ENCODE measurements at regions of chr7 and their contacts with region 1.

Region 1: GRCh38 chr7:80312139-80312661 is 177.6 kb downstream of the GNAI1 start:
- DNase-seq: peak; percentile 97
- H3K4me3 ChIP-seq: no peak overlapping the region
- H3K27ac ChIP-seq: peak overlapping the region; percentile 96
- H3K4me1 ChIP-seq: peaks cover 45% of the 10 kb centered on the region
- H3K27me3 ChIP-seq: no peaks in the 10 kb centered on the region
- CTCF ChIP-seq: no peak
- POLR2A ChIP-seq: peak; percentile 56

Region 2: DNA sequence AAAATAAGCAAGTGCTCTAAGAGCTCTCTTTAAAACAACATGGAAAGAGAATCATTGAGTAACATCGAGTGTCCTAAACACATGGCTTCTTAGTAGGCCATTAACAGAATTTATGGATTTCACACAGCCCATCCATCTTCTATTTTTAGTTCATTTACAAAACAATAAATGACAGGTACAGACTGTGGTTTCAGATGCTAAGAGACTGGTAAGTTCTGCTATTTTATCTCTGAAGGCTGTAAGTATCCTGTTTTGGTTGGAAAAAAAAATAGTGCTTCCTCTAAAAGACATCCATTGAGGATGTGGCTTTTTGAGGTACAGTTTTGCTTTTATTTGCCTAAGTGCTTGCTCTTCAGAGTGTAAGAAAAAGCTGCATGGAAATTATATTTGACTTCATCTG is 204.9 kb before region 1 on chr7:
- CTCF ChIA-PET with region 1: no interaction called
- POLR2A ChIA-PET with region 1: no interaction called
- dilution Hi-C with region 1: no loop called
- intact Hi-C with region 1: loop called (anchors 2 kb)
- DNase-seq: peak; percentile 59
- H3K4me3 ChIP-seq: peak overlapping the region in 1 of 3 experiments; percentile 40
- H3K27ac ChIP-seq: peak overlapping the region; percentile 58
- H3K4me1 ChIP-seq: peaks cover 28% of the 10 kb centered on the region
- H3K27me3 ChIP-seq: no peaks in the 10 kb centered on the region
- CTCF ChIP-seq: no peak
- POLR2A ChIP-seq: no peak

Region 3: DNA sequence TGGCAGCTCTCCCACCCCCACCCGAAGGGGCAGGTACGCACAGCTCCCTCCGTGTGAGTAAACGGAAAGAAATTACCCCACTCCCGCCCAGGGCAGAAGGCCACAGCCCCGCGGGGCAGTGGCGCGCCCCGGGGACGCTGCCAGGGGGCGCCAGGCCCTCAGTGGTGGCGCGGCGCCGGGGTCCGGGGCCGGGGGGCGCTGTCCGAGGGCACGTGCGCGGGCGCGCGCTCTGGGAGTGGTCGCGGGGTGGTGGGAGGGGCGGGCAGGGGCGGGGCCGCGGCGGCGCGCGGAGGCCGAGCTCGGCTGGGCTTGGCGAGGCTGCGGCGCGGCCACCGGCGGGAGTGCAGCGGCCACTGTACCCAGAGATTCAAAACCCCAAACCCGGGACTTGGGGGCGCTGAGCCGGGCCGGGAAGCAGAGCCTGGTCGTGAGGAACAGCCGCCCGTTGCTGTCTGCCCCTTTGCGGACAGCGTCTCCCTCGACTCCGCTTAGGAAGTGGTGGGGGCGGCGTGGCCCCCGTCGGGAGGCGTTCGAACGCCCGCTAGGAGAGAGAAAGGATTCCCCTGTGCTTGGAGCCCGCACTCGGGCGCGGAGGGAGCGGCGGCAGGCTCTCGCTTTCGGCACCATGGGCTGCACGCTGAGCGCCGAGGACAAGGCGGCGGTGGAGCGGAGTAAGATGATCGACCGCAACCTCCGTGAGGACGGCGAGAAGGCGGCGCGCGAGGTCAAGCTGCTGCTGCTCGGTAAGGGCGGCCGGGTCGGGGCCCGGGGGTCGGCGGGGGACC is 177.5 kb before region 1 on chr7 and contains the start of gene GNAI1:
- CTCF ChIA-PET with region 1: no interaction called
- POLR2A ChIA-PET with region 1: no interaction called
- dilution Hi-C with region 1: no loop called
- intact Hi-C with region 1: loop called (anchors 5 kb)
- DNase-seq: peak; percentile 65
- H3K4me3 ChIP-seq: peak within 1 kb of the TSS; percentile 88 to 94 (median 91)
- H3K27ac ChIP-seq: peak within 1 kb of the TSS; percentile 54
- H3K4me1 ChIP-seq: peaks cover 17% of the 10 kb centered on the region
- H3K27me3 ChIP-seq: peaks cover 0 to 1% of the 10 kb centered on the region in 2 experiments
- CTCF ChIP-seq: peak; percentile 30 to 49
- POLR2A ChIP-seq: peak; percentile 70
- total RNA-seq, gene GNAI1: 15.0 and 19.7 TPM in 2 replicates

Region 4: DNA sequence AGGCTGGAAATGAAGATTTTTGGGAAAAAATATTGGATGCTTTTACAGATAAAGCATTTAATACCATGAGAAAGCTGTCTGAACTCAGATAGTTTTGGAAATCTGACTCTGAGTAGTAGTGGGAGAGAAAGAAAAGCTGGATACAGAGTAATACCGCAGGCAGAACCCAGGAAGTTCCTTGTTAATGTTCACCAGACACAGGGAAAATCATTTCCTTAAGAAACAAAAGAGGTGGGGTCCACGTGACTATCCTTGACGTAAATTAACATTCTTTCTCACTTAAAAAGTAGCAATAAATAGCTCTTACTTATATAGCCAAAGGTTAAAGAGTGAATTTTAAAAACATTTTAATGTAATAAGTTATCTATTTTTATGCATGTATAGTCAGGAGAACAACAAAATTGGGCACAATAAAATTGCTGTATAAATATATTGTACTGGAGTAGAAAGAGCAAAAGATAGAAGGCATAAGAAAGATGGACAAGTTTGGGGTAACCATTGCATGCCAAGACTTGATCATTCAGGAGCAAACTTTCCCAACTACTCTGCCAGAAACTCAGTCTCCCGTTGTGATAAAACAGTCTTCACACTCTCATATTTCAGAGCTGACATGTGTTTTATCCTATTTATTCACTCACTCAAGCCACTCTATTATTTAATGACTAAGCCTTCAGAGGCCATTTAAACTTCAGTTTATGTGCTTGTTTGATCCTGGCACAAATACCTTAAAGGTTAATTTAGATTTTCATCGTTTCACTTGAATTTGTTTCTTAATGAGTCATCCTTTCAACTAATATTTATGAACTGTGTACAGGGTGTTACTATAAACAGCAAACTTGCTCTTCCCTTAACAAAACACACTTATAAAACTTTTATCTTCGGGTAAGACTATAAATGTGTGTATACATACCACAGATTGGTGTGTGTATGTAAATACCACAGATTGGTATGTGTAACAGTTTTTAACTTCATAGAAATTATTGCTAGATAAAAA is 34.5 kb before region 1 on chr7:
- CTCF ChIA-PET with region 1: no interaction called
- POLR2A ChIA-PET with region 1: no interaction called
- dilution Hi-C with region 1: no loop called
- intact Hi-C with region 1: loop called (anchors 1 kb)
- DNase-seq: peak; percentile 41
- H3K4me3 ChIP-seq: no peak overlapping the region
- H3K27ac ChIP-seq: no peak overlapping the region
- H3K4me1 ChIP-seq: peaks cover 7% of the 10 kb centered on the region
- H3K27me3 ChIP-seq: no peaks in the 10 kb centered on the region
- CTCF ChIP-seq: no peak
- POLR2A ChIP-seq: no peak

Region 5: GRCh38 chr7:80324032-80324431 is 11.8 kb after region 1 on chr7:
- CTCF ChIA-PET with region 1: interaction called, 3 read pairs
- POLR2A ChIA-PET with region 1: no interaction called
- dilution Hi-C with region 1: no loop called
- intact Hi-C with region 1: loop called (anchors 1 kb)
- DNase-seq: peak; percentile 37
- H3K4me3 ChIP-seq: no peak overlapping the region
- H3K27ac ChIP-seq: no peak overlapping the region
- H3K4me1 ChIP-seq: peaks cover 4% of the 10 kb centered on the region
- H3K27me3 ChIP-seq: no peaks in the 10 kb centered on the region
- CTCF ChIP-seq: no peak
- POLR2A ChIP-seq: no peak

Region 6: GRCh38 chr7:80379034-80379982 is 67.1 kb after region 1 on chr7:
- CTCF ChIA-PET with region 1: no interaction called
- POLR2A ChIA-PET with region 1: no interaction called
- dilution Hi-C with region 1: no loop called
- intact Hi-C with region 1: loop called (anchors 1 kb)
- DNase-seq: peak; percentile 78
- H3K4me3 ChIP-seq: no peak overlapping the region
- H3K27ac ChIP-seq: peak overlapping the region; percentile 7
- H3K4me1 ChIP-seq: peaks cover 12% of the 10 kb centered on the region
- H3K27me3 ChIP-seq: no peaks in the 10 kb centered on the region
- CTCF ChIP-seq: no peak
- POLR2A ChIP-seq: no peak

Region 7: GRCh38 chr7:80478683-80479082 is 166.5 kb after region 1 on chr7:
- CTCF ChIA-PET with region 1: no interaction called
- POLR2A ChIA-PET with region 1: no interaction called
- dilution Hi-C with region 1: no loop called
- intact Hi-C with region 1: no loop called
- DNase-seq: no peak
- H3K4me3 ChIP-seq: no peak overlapping the region
- H3K27ac ChIP-seq: no peak overlapping the region
- H3K4me1 ChIP-seq: no peaks in the 10 kb centered on the region
- H3K27me3 ChIP-seq: no peaks in the 10 kb centered on the region
- CTCF ChIP-seq: no peak
- POLR2A ChIP-seq: no peak